ENCODE measurements at regions of chr17 and their contacts with region 1.

Region 1: GRCh38 chr17:64661976-64662773 is at the start of gene SMURF2:
- DNase-seq: peak; percentile 69
- H3K4me3 ChIP-seq: peak within 1 kb of the TSS; percentile 57 to 82 (median 77)
- H3K27ac ChIP-seq: peak within 1 kb of the TSS; percentile 73
- H3K4me1 ChIP-seq: peaks cover 21% of the 10 kb centered on the region
- H3K27me3 ChIP-seq: no peaks in the 10 kb centered on the region
- CTCF ChIP-seq: no peak
- total RNA-seq, gene SMURF2: 68.7 to 93.7 TPM

Region 2: GRCh38 chr17:64183815-64184214 is 478.4 kb before region 1 on chr17:
- CTCF ChIA-PET with region 1: no interaction called
- dilution Hi-C with region 1: no loop called
- in situ Hi-C with region 1: no loop called
- intact Hi-C with region 1: no loop called
- DNase-seq: peak; percentile 41
- H3K4me3 ChIP-seq: no peak overlapping the region
- H3K27ac ChIP-seq: no peak overlapping the region
- H3K4me1 ChIP-seq: peaks cover 3% of the 10 kb centered on the region
- H3K27me3 ChIP-seq: no peaks in the 10 kb centered on the region
- CTCF ChIP-seq: no peak

Region 3: DNA sequence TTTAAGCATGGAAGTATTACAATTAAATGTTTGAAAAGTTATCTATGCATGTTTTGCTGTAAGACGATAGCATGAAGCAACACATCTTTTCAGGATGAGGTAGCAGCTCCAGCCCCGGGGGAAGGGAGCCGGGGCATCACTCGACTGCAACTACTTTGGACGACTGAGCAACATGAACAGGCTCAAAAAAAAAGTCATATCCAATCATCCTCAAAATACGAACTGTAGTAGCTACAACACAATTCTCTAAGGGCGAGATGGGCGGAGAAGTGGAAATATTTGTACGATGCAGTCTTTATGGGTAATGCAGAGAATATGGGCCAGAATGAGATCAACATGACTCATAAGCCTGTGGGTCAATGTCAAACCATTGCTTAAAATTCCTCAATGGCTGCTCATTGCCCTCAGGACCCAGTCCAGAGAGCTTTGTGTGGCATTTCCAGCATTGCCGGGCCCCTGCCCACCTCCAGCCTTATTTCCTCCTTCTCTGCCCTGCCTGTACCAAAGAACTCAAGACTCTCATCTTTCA is 17.6 kb after region 1 on chr17:
- CTCF ChIA-PET with region 1: no interaction called
- dilution Hi-C with region 1: no loop called
- in situ Hi-C with region 1: no loop called
- intact Hi-C with region 1: loop called (anchors 1 kb)
- DNase-seq: peak; percentile 98
- H3K4me3 ChIP-seq: no peak overlapping the region
- H3K27ac ChIP-seq: peak overlapping the region; percentile 87
- H3K4me1 ChIP-seq: peaks cover 28% of the 10 kb centered on the region
- H3K27me3 ChIP-seq: no peaks in the 10 kb centered on the region
- CTCF ChIP-seq: no peak

Region 4: DNA sequence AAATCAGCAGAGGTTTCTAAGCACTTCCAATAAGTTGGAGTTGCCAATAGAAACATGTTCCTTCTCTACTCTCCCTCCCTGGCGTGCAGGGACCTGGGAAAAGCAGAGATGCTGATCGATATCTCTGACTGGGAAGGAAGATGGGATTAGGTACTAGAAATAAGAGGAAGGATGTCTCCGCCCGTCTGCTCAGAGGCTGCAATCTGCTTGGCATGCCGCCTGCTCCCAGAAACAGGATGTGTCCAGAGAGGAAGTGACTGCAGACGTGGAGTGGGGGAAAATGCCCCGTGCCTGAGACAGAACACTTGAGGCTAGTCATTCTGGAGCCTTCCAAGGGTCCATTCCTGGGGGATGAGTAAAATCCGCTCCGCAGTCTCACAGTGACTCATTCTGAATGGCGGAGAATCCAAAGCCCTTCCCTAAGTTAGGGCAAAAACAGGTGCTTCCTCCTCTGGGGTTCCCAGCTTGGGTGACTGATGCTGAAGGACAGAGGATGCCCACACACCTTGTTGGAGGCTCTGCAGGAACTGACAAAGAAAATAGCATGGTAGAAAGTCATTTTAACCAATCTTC is 44.9 kb after region 1 on chr17:
- CTCF ChIA-PET with region 1: no interaction called
- dilution Hi-C with region 1: no loop called
- in situ Hi-C with region 1: no loop called
- intact Hi-C with region 1: loop called (anchors 1 kb)
- DNase-seq: peak; percentile 100
- H3K4me3 ChIP-seq: peak overlapping the region in 2 of 3 experiments; percentile 12 to 29
- H3K27ac ChIP-seq: peak overlapping the region; percentile 95
- H3K4me1 ChIP-seq: peaks cover 39% of the 10 kb centered on the region
- H3K27me3 ChIP-seq: no peaks in the 10 kb centered on the region
- CTCF ChIP-seq: no peak

Region 5: GRCh38 chr17:64736804-64737492 is 74.8 kb after region 1 on chr17:
- CTCF ChIA-PET with region 1: no interaction called
- dilution Hi-C with region 1: loop called (anchors 5 kb)
- in situ Hi-C with region 1: no loop called
- intact Hi-C with region 1: loop called (anchors 5 kb)
- DNase-seq: peak; percentile 46
- H3K4me3 ChIP-seq: no peak overlapping the region
- H3K27ac ChIP-seq: no peak overlapping the region
- H3K4me1 ChIP-seq: peaks cover 2% of the 10 kb centered on the region
- H3K27me3 ChIP-seq: no peaks in the 10 kb centered on the region
- CTCF ChIP-seq: peak; percentile 46 to 60

Region 6: GRCh38 chr17:64773836-64774761 is 111.9 kb after region 1 on chr17:
- CTCF ChIA-PET with region 1: interaction called, 3 read pairs
- dilution Hi-C with region 1: no loop called
- in situ Hi-C with region 1: no loop called
- intact Hi-C with region 1: loop called (anchors 2 kb)
- DNase-seq: peak; percentile 83
- H3K4me3 ChIP-seq: peak overlapping the region; percentile 41 to 50 (median 49)
- H3K27ac ChIP-seq: peak overlapping the region; percentile 54
- H3K4me1 ChIP-seq: peaks cover 17% of the 10 kb centered on the region
- H3K27me3 ChIP-seq: no peaks in the 10 kb centered on the region
- CTCF ChIP-seq: peak; percentile 53 to 66

Measured in mammary epithelial cell (primary cell).